ENCODE measurements at regions of chr1 and their contacts with region 1.

Region 1: GRCh38 chr1:162530307-162530987 is 31.1 kb upstream of the UAP1 start:
- DNase-seq: no peak
- H3K4me3 ChIP-seq: no peak overlapping the region
- H3K27ac ChIP-seq: no peak overlapping the region
- H3K4me1 ChIP-seq: no peaks in the 10 kb centered on the region
- H3K27me3 ChIP-seq: no peaks in the 10 kb centered on the region
- CTCF ChIP-seq: no peak

Region 2: GRCh38 chr1:162541619-162542141 is 11.2 kb after region 1 on chr1:
- CTCF ChIA-PET with region 1: interaction called, 10 read pairs
- POLR2A ChIA-PET with region 1: no interaction called
- intact Hi-C with region 1: no loop called
- DNase-seq: peak; percentile 52 to 57
- H3K4me3 ChIP-seq: no peak overlapping the region
- H3K27ac ChIP-seq: peak overlapping the region; percentile 54
- H3K4me1 ChIP-seq: peaks cover 28% of the 10 kb centered on the region
- H3K27me3 ChIP-seq: no peaks in the 10 kb centered on the region
- CTCF ChIP-seq: no peak